Ovary (tissue), 10 donors: ENCODE measurements at regions of chr3 and their contacts with region 1.

Region 1: GRCh38 chr3:115217678-115218451 is 70.8 kb upstream of the ZBTB20 start:
- DNase-seq: peak in 3 of 5 donors; percentile 11 to 21 (median 21)
- H3K4me3 ChIP-seq: no peak overlapping the region
- H3K27ac ChIP-seq: no peak overlapping the region
- H3K4me1 ChIP-seq: peaks cover 2% of the 10 kb centered on the region
- H3K27me3 ChIP-seq: no peaks in the 10 kb centered on the region
- CTCF ChIP-seq: peak; percentile 17 to 73 (median 44)
- EP300 ChIP-seq: no peak
- POLR2A ChIP-seq: no peak

Region 2: GRCh38 chr3:115685097-115685496 is 467.2 kb after region 1 on chr3:
- intact Hi-C with region 1: loop called in 3 of 4 experiments (anchors 5 to 10 kb)
- DNase-seq: no peak
- H3K4me3 ChIP-seq: no peak overlapping the region
- H3K27ac ChIP-seq: no peak overlapping the region
- H3K4me1 ChIP-seq: no peaks in the 10 kb centered on the region
- H3K27me3 ChIP-seq: no peaks in the 10 kb centered on the region
- CTCF ChIP-seq: no peak
- EP300 ChIP-seq: no peak
- POLR2A ChIP-seq: no peak

Region 3: DNA sequence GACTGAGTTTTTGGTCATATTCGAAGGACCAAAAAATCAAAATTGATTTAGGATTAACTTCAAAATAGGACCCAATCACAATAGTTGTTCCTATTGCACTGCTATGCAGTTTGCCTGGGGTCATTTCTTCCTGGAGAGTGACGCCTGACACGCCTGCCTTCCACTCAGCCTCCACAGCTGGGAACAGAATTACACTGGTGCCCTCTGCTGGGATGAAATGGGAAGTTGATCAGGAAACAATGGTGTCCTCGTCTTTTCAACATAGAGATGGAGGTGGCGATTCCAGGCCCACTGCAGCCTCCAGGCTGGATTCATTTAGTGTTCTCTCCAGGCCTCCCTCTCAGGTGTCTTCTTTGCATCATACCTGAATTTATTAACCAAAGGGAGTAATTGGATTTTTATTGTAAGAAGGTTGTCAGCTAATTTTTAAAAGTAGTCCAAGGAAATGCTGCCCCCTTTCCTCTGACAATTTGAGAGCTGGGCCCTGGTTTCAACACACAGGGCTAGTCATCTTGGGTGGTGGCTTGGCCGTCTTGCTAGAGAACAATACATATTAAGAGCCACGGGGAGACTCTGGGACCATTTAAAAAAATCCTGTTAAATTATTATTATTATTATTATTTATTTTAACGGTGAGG is 475.1 kb after region 1 on chr3:
- intact Hi-C with region 1: loop called in 3 of 4 experiments (anchors 5 to 10 kb)
- DNase-seq: peak; percentile 50 to 74 (median 59)
- H3K4me3 ChIP-seq: no peak overlapping the region
- H3K27ac ChIP-seq: no peak overlapping the region
- H3K4me1 ChIP-seq: peaks cover 3% of the 10 kb centered on the region
- H3K27me3 ChIP-seq: no peaks in the 10 kb centered on the region
- CTCF ChIP-seq: peak; percentile 58 to 74 (median 68)
- EP300 ChIP-seq: no peak
- POLR2A ChIP-seq: no peak

Region 4: DNA sequence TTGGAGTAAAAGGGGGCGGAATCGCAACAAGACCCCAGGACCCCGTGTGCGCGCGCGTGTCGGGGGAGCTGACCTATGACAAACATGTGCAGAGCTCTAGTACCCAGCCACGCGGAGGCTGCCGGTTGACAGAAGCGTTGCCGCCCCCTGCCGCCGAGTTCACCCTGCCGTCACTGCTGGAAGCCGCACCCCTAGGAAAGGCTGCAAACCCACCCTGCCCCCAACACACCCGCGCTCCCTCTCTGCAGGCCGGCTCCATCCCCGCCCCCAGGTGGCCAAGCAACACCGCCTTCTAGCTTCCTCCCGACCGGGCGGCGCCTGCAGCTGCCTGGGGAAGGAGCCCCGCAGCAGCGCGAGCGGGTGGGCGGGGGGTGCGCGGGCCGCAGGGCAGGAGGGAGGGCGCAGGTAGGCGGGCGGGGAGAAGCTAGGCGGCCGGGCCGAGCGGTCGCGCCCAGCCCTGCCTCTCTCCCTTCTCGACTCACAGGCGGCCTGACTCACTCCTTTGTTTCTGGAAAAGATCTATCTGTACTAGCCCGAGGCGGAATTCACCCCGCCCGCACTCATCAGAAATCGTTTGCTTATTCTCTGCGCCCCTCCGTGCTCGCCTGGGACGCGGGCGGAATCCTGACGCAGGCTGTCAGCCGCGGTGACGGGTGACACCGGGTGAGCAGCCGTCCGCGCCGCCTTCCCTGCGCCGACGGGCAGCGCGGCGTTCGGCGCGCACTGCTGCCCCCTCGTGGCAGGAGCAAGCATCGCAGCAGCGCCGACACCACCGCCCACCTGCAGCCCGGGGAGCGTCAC is 566.3 kb after region 1 on chr3:
- intact Hi-C with region 1: loop called in 2 of 4 experiments (anchors 10 kb)
- DNase-seq: peak; percentile 92 to 96 (median 95)
- H3K4me3 ChIP-seq: peak overlapping the region; percentile 84
- H3K27ac ChIP-seq: peak overlapping the region; percentile 70 to 95
- H3K4me1 ChIP-seq: peaks cover 1% of the 10 kb centered on the region
- H3K27me3 ChIP-seq: no peaks in the 10 kb centered on the region
- CTCF ChIP-seq: peak; percentile 88 to 97 (median 93)
- EP300 ChIP-seq: no peak
- POLR2A ChIP-seq: peak; percentile 23